ENCODE measurements at regions of chr12 and their contacts with region 1.

Region 1: GRCh38 chr12:33313481-33313880 is 126.1 kb downstream of the SYT10 start:
- DNase-seq: no peak
- H3K4me3 ChIP-seq: no peak overlapping the region
- H3K27ac ChIP-seq: no peak overlapping the region
- H3K4me1 ChIP-seq: no peaks in the 10 kb centered on the region
- H3K27me3 ChIP-seq: no peaks in the 10 kb centered on the region
- CTCF ChIP-seq: no peak

Region 2: GRCh38 chr12:32926963-32927362 is 386.5 kb before region 1 on chr12:
- CTCF ChIA-PET with region 1: no interaction called
- dilution Hi-C with region 1: no loop called
- in situ Hi-C with region 1: no loop called
- intact Hi-C with region 1: no loop called
- DNase-seq: no peak
- H3K4me3 ChIP-seq: no peak overlapping the region
- H3K27ac ChIP-seq: no peak overlapping the region
- H3K4me1 ChIP-seq: peaks cover 2% of the 10 kb centered on the region
- H3K27me3 ChIP-seq: no peaks in the 10 kb centered on the region
- CTCF ChIP-seq: no peak

Region 3: GRCh38 chr12:33330937-33331336 is 17.5 kb after region 1 on chr12:
- CTCF ChIA-PET with region 1: no interaction called
- dilution Hi-C with region 1: no loop called
- in situ Hi-C with region 1: no loop called
- intact Hi-C with region 1: loop called (anchors 2 kb)
- DNase-seq: no peak
- H3K4me3 ChIP-seq: no peak overlapping the region
- H3K27ac ChIP-seq: no peak overlapping the region
- H3K4me1 ChIP-seq: no peaks in the 10 kb centered on the region
- H3K27me3 ChIP-seq: no peaks in the 10 kb centered on the region
- CTCF ChIP-seq: no peak

Measured in mammary epithelial cell (primary cell).